ENCODE measurements at regions of chr7 and their contacts with region 1.

Region 1: GRCh38 chr7:22559829-22560489 is 60.0 kb upstream of the STEAP1B start:
- DNase-seq: peak; percentile 91
- H3K4me3 Mint-ChIP-seq: no peak overlapping the region
- H3K27ac Mint-ChIP-seq: no peak overlapping the region
- H3K4me1 Mint-ChIP-seq: peaks cover 37% of the 10 kb centered on the region
- H3K27me3 Mint-ChIP-seq: peaks cover 10% of the 10 kb centered on the region

Region 2: DNA sequence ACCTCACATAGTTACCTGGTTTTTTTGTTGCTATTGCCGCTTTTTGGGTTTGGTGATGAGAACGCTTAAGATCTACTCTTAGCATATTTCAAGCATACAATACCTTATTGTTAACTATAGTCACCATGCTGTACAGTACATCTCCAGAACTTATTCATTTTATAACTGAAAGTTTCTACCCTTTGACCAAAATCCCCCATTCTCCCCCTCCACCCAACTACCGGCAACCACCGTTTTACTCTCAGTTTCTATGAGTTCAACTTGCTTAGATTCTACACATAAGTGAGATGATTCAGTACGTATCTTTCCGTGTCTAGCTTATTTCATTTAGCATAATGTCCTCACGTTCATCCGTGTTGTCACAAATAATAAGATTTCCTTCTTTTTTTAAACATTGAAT is 80.3 kb after region 1 on chr7:
- intact Hi-C with region 1: loop called (anchors 1 kb)
- DNase-seq: peak; percentile 74
- H3K4me3 Mint-ChIP-seq: no peak overlapping the region
- H3K27ac Mint-ChIP-seq: no peak overlapping the region
- H3K4me1 Mint-ChIP-seq: peaks cover 10% of the 10 kb centered on the region
- H3K27me3 Mint-ChIP-seq: peaks cover 30% of the 10 kb centered on the region

Region 3: DNA sequence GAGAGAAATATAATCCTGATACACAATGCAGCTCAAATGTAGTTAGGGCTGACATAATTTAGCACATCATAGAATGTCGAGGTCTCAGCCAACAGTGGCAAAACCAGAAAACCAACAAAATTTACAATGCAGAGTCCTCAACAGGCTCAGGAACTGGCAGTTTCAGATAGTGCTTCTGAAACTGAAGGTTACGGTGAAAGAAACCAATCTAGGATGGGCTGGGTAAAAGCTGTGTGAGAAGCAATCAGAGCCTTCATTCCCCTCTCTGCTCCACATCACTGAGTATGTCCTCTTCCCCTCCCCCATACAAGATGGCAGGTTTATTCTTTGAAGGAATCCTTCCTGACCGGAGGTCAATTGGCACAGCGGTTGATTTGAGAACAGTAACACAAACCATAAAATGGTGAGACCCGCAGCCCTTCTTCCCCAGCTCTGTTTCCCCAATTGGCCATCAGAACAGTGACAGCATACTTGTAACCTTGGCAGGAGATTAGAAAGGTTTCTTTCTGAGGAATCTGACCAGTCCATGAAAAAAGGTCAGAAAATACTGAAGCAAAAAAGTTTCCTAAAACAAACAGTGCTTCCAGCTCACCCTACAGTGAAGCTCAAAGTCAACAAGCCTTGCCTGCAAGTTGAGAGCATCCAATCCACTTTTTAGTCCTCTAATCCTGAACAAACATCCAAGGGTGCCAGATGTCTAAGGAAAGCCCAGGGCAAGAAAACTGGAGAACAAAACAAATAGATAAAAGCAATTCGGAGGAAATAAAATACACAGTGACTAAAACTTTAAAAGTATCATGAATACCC is 113.1 kb after region 1 on chr7:
- intact Hi-C with region 1: loop called (anchors 1 kb)
- DNase-seq: peak; percentile 73
- H3K4me3 Mint-ChIP-seq: peak overlapping the region; percentile 26
- H3K27ac Mint-ChIP-seq: no peak overlapping the region
- H3K4me1 Mint-ChIP-seq: peaks cover 55% of the 10 kb centered on the region
- H3K27me3 Mint-ChIP-seq: peaks cover 8% of the 10 kb centered on the region

Region 4: DNA sequence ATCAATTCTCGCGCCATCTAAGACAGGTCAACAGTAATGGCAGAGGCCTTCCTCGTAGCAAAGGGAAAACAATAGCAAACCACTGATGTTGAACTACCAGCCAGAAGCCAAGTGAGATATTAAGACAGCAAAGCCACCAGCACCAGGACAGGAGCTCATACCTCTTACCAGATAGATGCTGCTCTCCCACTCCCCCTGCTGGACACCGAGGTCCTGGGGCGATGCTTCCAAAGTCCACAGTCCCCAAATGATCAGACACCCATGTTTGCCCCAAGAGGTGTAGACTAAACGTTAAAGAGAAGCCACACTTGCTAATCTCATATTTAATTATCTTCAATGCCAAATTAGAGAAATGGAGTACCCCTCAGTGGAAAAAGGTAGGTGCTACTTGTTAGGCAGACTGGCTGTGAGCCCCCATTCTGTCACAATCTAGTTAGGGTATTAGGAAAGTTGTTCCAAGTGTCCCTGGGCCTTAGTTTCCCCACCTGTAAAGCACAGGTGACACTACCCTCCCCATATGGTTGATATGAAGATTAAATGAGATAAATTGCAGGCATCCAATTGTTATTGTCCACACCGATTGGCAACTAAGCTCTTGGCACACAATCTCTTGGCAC is 222.8 kb after region 1 on chr7:
- intact Hi-C with region 1: loop called (anchors 1 kb)
- DNase-seq: peak; percentile 92
- H3K4me3 Mint-ChIP-seq: no peak overlapping the region
- H3K27ac Mint-ChIP-seq: no peak overlapping the region
- H3K4me1 Mint-ChIP-seq: no peaks in the 10 kb centered on the region
- H3K27me3 Mint-ChIP-seq: peaks cover 20% of the 10 kb centered on the region

Measured in activated CD4-positive, alpha-beta T cell treated with anti-CD3 and anti-CD28 coated beads, Interleukin-2, amount 10 ng/mL, durations not matched to agents 24 days and 14 days (primary cell).